Activated naive CD4-positive, alpha-beta T cell treated with anti-CD3 and anti-CD28 coated beads, Interleukin-2, amount 10 ng/mL, durations not matched to agents 7 days and 5 days (primary cell): ENCODE measurements at regions of chr2 and their contacts with region 1.

Region 1: GRCh38 chr2:172484253-172484652 is 56.9 kb downstream of the ITGA6 start:
- DNase-seq: no peak
- H3K4me3 Mint-ChIP-seq: no peak overlapping the region
- H3K27ac Mint-ChIP-seq: peak overlapping the region; percentile 1
- H3K4me1 Mint-ChIP-seq: peaks cover 37% of the 10 kb centered on the region
- H3K27me3 Mint-ChIP-seq: no peaks in the 10 kb centered on the region

Region 2: GRCh38 chr2:172446474-172447063 is 37.7 kb before region 1 on chr2:
- CTCF ChIA-PET with region 1: no interaction called
- DNase-seq: peak; percentile 30
- H3K4me3 Mint-ChIP-seq: no peak overlapping the region
- H3K27ac Mint-ChIP-seq: no peak overlapping the region
- H3K4me1 Mint-ChIP-seq: peaks cover 67% of the 10 kb centered on the region
- H3K27me3 Mint-ChIP-seq: no peaks in the 10 kb centered on the region

Region 3: GRCh38 chr2:172496160-172496608 is 11.9 kb after region 1 on chr2:
- CTCF ChIA-PET with region 1: interaction called, 10 read pairs
- DNase-seq: peak; percentile 64
- H3K4me3 Mint-ChIP-seq: peak overlapping the region; percentile 20
- H3K27ac Mint-ChIP-seq: peak overlapping the region; percentile 97
- H3K4me1 Mint-ChIP-seq: peaks cover 50% of the 10 kb centered on the region
- H3K27me3 Mint-ChIP-seq: no peaks in the 10 kb centered on the region

Region 4: DNA sequence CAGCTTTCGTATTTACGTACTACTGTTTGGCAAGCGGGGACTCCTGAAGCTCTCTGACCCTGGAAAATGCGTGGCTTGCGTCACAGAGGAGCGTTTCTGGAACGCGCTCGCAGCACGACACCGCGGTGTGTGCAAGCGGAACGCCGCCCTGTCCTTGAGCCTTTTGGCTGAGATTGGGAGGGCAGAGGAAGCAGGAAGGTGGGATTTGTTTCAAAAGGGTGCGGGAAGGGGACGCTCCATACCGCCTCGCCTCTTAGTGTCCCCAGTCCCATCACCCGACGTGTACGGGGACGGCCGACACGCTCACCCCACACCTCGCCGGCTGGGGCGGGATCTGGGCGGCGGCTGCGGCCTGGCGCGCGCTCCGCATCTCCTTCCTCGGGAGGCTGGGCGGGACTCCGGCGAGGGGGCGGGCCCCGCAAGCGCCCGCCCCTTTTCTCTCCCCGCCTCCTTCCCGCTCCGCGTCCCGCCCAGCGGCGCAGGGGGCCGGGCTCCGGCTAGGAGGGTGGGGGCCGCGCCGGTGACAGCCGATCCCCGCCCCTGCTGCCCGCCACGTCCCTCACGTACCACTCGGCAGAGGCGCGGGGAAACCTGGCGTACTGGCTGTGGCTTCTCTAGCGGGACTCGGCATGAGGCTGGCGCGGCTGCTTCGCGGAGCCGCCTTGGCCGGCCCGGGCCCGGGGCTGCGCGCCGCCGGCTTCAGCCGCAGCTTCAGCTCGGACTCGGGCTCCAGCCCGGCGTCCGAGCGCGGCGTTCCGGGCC is 71.5 kb after region 1 on chr2 and contains the start of gene PDK1:
- CTCF ChIA-PET with region 1: no interaction called
- DNase-seq: peak; percentile 93
- H3K4me3 Mint-ChIP-seq: peak within 1 kb of the TSS; percentile 90
- H3K27ac Mint-ChIP-seq: peak within 1 kb of the TSS; percentile 95
- H3K4me1 Mint-ChIP-seq: peaks cover 68% of the 10 kb centered on the region
- H3K27me3 Mint-ChIP-seq: peaks cover 8% of the 10 kb centered on the region